Astrocyte of the cerebellum (primary cell): ENCODE measurements at regions of chr11 and their contacts with region 1.

Region 1: DNA sequence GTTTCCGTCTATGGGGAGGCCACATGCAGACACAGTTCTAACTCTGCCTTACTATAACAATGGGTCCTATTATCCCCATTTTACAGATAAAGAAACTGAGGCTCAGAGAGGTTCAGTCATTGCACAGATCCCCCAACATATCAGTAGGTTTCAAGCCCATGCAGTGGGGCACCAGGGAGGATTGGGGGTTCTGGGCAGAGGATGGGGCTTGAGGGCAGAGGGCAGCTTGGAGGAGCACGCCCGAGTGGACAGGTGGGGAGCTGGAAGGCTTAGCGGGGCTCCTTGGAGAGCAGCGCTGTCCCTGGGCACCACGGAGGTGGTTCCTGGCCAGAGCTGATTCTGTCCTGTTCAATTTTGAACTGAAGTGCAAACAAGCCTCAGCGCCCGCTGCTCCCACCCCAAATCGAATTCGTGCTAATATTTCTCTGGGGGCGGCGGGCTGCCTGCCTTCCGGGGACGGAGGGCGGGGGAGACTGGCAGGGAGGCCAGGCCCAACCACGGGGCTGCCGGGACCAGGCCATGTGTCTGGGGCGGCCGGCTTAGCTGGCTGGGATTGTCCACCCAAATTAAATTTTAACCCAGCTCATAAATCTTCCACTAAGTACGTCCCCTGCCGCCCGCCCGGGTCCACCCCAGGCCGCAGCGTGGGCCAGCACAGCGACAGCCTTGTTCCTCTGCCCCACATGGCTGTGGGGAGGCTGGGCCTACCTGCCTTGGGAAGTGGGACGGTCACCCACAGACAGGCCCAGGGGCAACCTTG is 49.4 kb downstream of the FLRT1 start:
- DNase-seq: no peak
- H3K4me3 ChIP-seq: no peak overlapping the region
- CTCF ChIP-seq: no peak

Region 2: DNA sequence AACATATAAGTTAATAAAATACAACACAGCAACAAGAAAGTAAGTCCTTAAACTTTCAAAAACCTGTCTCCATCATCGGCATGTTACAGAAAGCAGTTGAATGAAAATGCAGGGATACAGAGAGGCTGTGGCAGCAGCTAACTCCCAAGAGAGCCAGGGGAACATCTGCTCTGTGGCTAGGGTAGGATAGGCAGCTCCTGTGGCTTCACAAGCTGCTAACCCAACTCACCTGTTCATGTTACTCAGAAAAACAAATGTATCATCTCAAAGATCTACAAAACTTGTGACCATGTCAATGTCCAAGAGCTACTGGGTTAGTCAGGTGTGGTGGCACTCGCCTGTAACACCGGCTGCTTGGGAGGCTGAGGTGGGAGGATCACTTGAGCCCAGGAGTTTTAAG is 455.7 kb before region 1 on chr11:
- in situ Hi-C with region 1: no loop called
- DNase-seq: no peak
- H3K4me3 ChIP-seq: no peak overlapping the region
- CTCF ChIP-seq: no peak

Region 3: GRCh38 chr11:64117763-64118459 is 32.8 kb after region 1 on chr11:
- in situ Hi-C with region 1: loop called (anchors 5 kb)
- DNase-seq: no peak
- H3K4me3 ChIP-seq: no peak overlapping the region
- CTCF ChIP-seq: no peak

Region 4: GRCh38 chr11:64131683-64132190 is 46.6 kb after region 1 on chr11:
- in situ Hi-C with region 1: no loop called
- DNase-seq: no peak
- H3K4me3 ChIP-seq: no peak overlapping the region
- CTCF ChIP-seq: no peak

Region 5: DNA sequence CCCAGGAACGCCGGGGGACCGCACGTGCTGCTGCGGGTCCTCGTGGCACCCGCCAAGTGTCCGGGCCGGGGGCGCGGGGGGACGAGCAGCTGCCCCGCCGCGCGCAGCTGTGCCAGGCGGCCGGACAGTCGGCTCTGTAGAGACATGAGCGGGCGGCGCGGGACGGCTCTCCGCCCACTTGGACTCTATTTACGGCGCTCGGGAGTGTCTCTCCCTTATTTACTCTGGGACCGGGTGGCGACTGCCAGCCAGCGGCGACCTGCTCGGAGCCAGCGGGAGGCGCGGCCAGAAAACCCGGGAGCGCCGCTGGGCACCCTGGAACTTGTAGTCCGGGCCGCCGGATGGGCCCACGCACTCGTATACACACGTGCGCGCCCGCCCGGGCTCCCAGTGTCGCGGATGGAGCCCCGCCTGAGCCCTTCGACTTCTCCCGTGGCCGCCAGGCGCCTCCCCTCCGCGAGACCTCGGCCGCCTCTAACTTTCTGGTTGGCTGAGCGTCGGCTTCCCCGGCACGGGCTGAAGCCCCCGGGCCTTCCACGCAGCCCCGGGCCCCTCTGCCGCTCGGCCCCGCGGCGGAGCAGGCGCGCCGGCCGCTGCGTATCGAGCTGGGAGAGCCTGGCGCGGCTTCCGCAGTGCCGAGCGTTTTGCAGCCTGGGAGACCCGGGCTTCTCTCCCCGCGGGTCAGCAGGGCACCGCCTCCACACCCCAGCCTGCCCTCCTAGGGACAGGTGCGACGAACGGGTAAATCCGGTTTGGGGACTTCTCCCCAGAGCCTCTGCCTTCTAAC is 80.9 kb after region 1 on chr11 and contains the start of gene MACROD1:
- in situ Hi-C with region 1: no loop called
- DNase-seq: no peak
- H3K4me3 ChIP-seq: peak within 1 kb of the TSS; percentile 68
- CTCF ChIP-seq: no peak